ENCODE measurements at regions of chr5 and their contacts with region 1.

Region 1: DNA sequence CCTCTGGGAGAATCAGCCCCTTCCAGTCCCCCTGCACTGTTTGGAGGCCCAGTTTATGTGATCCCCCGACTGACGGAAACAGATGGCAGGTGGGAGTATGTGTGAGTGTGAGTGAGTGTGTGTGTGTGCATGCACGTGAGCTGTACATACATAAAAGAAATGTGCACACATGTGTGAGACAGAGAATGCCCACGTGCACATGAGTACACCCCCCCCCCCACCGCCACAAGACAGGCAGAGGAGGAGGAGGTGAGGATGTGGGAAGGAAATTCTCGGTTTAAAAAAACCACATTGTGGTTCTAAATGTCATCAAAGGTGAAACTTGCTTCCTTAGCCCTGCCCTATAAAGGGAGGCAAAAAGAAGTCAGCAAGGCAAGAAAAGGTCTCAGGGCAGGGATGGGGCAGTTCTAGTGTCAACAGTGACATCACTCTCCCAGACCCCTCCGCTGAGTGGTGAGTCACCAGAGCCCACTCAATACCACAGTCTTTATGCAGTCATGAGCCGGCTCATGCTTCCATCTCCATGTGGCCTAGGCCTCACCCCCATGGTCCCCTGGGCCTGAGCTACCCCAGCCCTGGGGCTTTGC is 79.2 kb upstream of the HSPA9 start:
- DNase-seq: peak; percentile 65
- H3K4me3 Mint-ChIP-seq: peak overlapping the region; percentile 12
- H3K27ac Mint-ChIP-seq: peak overlapping the region; percentile 34
- H3K4me1 Mint-ChIP-seq: peaks cover 17% of the 10 kb centered on the region
- H3K27me3 Mint-ChIP-seq: peaks cover 91% of the 10 kb centered on the region

Region 2: DNA sequence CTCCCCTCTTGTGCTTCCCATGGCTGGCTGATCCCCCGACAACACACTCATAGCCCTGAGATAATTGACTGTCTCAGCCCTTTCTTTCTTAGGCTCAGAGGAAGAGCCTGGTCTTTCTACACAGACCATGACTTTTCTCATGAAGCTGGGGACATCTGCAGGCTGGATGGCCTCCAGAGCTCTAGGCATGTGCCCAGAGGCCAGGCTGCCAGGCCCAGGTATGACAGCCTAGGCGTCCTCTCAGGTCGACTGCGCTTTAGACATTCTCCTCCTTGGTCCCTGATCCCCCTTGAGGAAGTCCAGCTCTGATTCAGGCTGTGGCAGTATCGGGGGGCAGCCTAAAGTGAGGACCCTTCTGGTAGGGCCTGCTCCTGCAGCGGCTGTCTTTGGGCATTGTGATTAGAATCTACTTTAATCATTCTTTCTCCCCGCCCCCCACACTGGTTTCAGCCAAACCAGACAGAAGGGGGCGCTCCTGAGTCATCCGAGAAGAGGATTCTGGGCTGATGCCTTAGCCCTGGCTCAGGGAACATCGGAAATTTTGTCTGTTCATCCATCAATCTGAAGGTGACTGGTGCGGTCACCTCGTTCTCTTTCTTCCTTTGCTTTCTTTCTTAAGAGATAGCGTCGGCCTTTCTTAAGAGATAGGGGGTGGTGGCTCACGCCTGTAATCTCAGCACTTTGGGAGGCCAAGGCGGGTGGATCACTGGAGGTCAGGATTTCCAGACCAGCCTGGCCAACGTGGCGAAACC is 12.7 kb before region 1 on chr5:
- CTCF ChIA-PET with region 1: interaction called, 21 read pairs
- POLR2A ChIA-PET with region 1: no interaction called
- DNase-seq: peak; percentile 80
- H3K4me3 Mint-ChIP-seq: no peak overlapping the region
- H3K27ac Mint-ChIP-seq: no peak overlapping the region
- H3K4me1 Mint-ChIP-seq: no peaks in the 10 kb centered on the region
- H3K27me3 Mint-ChIP-seq: peaks cover 83% of the 10 kb centered on the region

Measured in activated CD4-positive, alpha-beta T cell treated with anti-CD3 and anti-CD28 coated beads, Interleukin-2, amount 10 ng/mL, durations not matched to agents 7 days and 5 days (primary cell).